Activated naive CD4-positive, alpha-beta T cell treated with anti-CD3 and anti-CD28 coated beads for 36 hours (primary cell): ENCODE measurements at regions of chrX and their contacts with region 1.

Region 1: DNA sequence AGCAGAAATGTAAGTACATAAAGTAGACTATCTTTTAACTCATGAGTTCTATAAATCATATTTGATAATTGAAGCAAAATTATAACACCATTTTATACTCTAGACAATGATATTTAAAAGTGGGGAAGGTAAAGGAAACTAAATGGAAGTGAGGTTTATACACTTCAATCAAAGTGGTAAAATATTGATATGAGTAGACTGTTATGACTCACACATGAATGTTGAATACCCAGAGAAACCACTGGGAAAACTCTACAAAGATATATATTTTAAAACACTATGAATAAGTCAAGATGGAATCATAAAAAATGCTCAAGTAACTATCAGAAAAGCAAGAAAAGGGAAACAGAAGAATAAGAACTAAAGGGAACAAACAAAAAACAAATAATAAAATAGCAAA is 8.4 kb downstream of the VSIG1 start:
- DNase-seq: no peak
- H3K4me3 Mint-ChIP-seq: no peak overlapping the region
- H3K27ac Mint-ChIP-seq: no peak overlapping the region
- H3K4me1 Mint-ChIP-seq: peaks cover 7% of the 10 kb centered on the region
- H3K27me3 Mint-ChIP-seq: no peaks in the 10 kb centered on the region

Region 2: DNA sequence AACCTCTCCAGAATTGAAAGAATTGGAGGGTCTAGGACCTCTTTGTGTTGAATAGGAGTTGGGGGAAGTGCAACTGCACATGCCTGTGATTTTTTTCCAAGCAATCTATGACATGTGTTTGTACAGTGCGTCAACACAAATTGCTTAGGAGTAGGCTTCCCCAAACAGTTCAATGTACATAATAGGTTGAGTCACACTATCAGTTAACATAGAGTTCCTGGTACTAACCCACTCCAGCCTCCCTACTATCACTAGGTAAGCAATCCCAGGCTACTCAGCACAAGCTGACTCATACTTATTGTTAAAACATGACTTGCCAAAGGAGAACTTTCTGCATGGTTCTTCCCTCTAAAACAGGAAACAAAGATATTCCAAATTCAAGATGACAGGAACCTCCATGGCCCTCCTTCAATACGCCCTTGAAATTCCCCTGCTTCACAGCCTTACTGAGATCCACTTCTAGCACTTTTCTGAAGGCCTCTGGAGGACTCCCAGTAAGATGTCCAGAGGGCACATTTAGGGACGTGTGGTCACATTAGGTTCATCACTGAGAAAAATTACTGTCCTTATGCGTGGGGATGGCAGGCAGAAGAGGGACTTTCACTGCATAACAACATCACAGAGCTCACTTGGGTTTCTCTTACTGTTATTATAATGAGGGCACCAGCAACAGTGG is 16.8 kb before region 1 on chrX:
- CTCF ChIA-PET with region 1: no interaction called
- intact Hi-C with region 1: loop called (anchors 2 kb)
- DNase-seq: no peak
- H3K4me3 Mint-ChIP-seq: no peak overlapping the region
- H3K27ac Mint-ChIP-seq: no peak overlapping the region
- H3K4me1 Mint-ChIP-seq: peaks cover 53% of the 10 kb centered on the region
- H3K27me3 Mint-ChIP-seq: no peaks in the 10 kb centered on the region